Naive thymus-derived CD4-positive, alpha-beta T cell (primary cell): ENCODE measurements at regions of chr3 and their contacts with region 1.

Region 1: DNA sequence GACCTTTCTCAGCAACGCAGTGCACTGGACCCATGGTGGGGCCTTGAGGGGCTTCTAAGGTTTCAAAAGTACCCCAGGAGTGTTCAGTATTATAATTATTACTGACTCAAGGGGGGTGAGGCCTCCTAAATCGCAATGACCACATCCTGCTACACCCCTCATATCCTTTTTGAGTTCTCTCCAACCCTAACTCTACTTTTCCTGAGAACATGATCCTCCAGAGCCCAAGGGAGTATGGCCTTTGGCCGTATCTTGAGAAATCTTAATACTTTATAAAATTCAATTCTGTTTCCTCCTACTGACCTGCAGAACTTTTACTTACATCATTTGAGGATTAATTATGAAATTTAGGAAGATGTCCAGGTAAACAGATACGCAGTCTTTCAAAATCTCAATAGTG is 30.4 kb upstream of the RARRES1 start:
- DNase-seq: no peak
- ATAC-seq: no peak
- H3K4me3 ChIP-seq: no peak overlapping the region
- H3K4me3 Mint-ChIP-seq: no peak overlapping the region
- H3K27ac ChIP-seq: no peak overlapping the region
- H3K27ac Mint-ChIP-seq: no peak overlapping the region
- H3K4me1 ChIP-seq: no peaks in the 10 kb centered on the region
- H3K4me1 Mint-ChIP-seq: peaks cover 0 to 12% (median 0%) of the 10 kb centered on the region in 7 donors
- H3K27me3 ChIP-seq: no peaks in the 10 kb centered on the region
- H3K27me3 Mint-ChIP-seq: no peaks in the 10 kb centered on the region

Region 2: DNA sequence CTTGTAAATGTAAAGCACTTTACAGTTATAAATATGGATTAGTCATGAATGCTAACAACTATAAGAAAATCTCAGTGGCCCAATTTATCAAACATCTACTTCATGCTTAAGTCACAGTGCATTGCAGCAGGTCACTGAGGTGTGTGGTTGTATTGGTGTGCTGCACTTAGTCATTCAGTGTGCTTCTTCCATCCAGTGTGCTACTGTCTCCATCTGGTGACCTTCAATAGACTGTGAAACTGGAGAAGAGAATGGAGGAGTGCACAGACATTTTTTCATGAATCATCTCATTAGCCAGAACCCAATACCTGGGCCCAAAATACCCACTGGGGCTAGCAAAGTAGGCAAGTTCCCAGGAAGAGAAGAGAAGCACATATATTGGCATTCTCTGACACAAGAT is 856.1 kb before region 1 on chr3:
- CTCF ChIA-PET with region 1: no interaction called
- POLR2A ChIA-PET with region 1: no interaction called
- intact Hi-C with region 1: loop called in 1 of 2 experiments (anchors 5 kb)
- DNase-seq: no peak
- ATAC-seq: no peak
- H3K4me3 ChIP-seq: no peak overlapping the region
- H3K4me3 Mint-ChIP-seq: no peak overlapping the region
- H3K27ac ChIP-seq: no peak overlapping the region
- H3K27ac Mint-ChIP-seq: no peak overlapping the region
- H3K4me1 ChIP-seq: no peaks in the 10 kb centered on the region
- H3K4me1 Mint-ChIP-seq: no peaks in the 10 kb centered on the region
- H3K27me3 ChIP-seq: no peaks in the 10 kb centered on the region
- H3K27me3 Mint-ChIP-seq: no peaks in the 10 kb centered on the region